ENCODE measurements at regions of chr6 and their contacts with region 1.

Region 1: GRCh38 chr6:56570413-56571359 is 72.0 kb downstream of the DST start:
- DNase-seq: peak; percentile 52
- H3K4me3 ChIP-seq: no peak overlapping the region
- H3K27ac ChIP-seq: no peak overlapping the region
- H3K4me1 ChIP-seq: no peaks in the 10 kb centered on the region
- H3K27me3 ChIP-seq: no peaks in the 10 kb centered on the region
- CTCF ChIP-seq: peak; percentile 44 to 51
- POLR2A ChIP-seq: no peak

Region 2: GRCh38 chr6:56359201-56359899 is 211.3 kb before region 1 on chr6:
- CTCF ChIA-PET with region 1: interaction called, 13 read pairs
- POLR2A ChIA-PET with region 1: no interaction called
- dilution Hi-C with region 1: no loop called
- intact Hi-C with region 1: loop called (anchors 1 kb)
- DNase-seq: peak; percentile 83
- H3K4me3 ChIP-seq: no peak overlapping the region
- H3K27ac ChIP-seq: no peak overlapping the region
- H3K4me1 ChIP-seq: peaks cover 47% of the 10 kb centered on the region
- H3K27me3 ChIP-seq: no peaks in the 10 kb centered on the region
- CTCF ChIP-seq: peak; percentile 55 to 59
- POLR2A ChIP-seq: no peak

Region 3: GRCh38 chr6:56370561-56371211 is 200.0 kb before region 1 on chr6:
- CTCF ChIA-PET with region 1: interaction called, 41 read pairs
- POLR2A ChIA-PET with region 1: no interaction called
- dilution Hi-C with region 1: no loop called
- intact Hi-C with region 1: no loop called
- DNase-seq: peak; percentile 99
- H3K4me3 ChIP-seq: peak overlapping the region in 1 of 3 experiments; percentile 52
- H3K27ac ChIP-seq: peak overlapping the region; percentile 99
- H3K4me1 ChIP-seq: peaks cover 57% of the 10 kb centered on the region
- H3K27me3 ChIP-seq: no peaks in the 10 kb centered on the region
- CTCF ChIP-seq: no peak
- POLR2A ChIP-seq: no peak

Region 4: GRCh38 chr6:56549014-56549413 is 21.7 kb before region 1 on chr6:
- CTCF ChIA-PET with region 1: interaction called, 22 read pairs
- POLR2A ChIA-PET with region 1: no interaction called
- dilution Hi-C with region 1: no loop called
- intact Hi-C with region 1: no loop called
- DNase-seq: peak; percentile 64
- H3K4me3 ChIP-seq: no peak overlapping the region
- H3K27ac ChIP-seq: no peak overlapping the region
- H3K4me1 ChIP-seq: no peaks in the 10 kb centered on the region
- H3K27me3 ChIP-seq: no peaks in the 10 kb centered on the region
- CTCF ChIP-seq: peak in 1 of 2 donors; percentile 32
- POLR2A ChIP-seq: no peak

Region 5: GRCh38 chr6:56581296-56581925 is 10.7 kb after region 1 on chr6:
- CTCF ChIA-PET with region 1: interaction called, 34 read pairs
- POLR2A ChIA-PET with region 1: no interaction called
- dilution Hi-C with region 1: no loop called
- intact Hi-C with region 1: no loop called
- DNase-seq: peak; percentile 30
- H3K4me3 ChIP-seq: no peak overlapping the region
- H3K27ac ChIP-seq: no peak overlapping the region
- H3K4me1 ChIP-seq: peaks cover 5% of the 10 kb centered on the region
- H3K27me3 ChIP-seq: no peaks in the 10 kb centered on the region
- CTCF ChIP-seq: no peak
- POLR2A ChIP-seq: no peak

Measured in endothelial cell of umbilical vein (primary cell).